ENCODE measurements at regions of chr7 and their contacts with region 1.

Region 1: DNA sequence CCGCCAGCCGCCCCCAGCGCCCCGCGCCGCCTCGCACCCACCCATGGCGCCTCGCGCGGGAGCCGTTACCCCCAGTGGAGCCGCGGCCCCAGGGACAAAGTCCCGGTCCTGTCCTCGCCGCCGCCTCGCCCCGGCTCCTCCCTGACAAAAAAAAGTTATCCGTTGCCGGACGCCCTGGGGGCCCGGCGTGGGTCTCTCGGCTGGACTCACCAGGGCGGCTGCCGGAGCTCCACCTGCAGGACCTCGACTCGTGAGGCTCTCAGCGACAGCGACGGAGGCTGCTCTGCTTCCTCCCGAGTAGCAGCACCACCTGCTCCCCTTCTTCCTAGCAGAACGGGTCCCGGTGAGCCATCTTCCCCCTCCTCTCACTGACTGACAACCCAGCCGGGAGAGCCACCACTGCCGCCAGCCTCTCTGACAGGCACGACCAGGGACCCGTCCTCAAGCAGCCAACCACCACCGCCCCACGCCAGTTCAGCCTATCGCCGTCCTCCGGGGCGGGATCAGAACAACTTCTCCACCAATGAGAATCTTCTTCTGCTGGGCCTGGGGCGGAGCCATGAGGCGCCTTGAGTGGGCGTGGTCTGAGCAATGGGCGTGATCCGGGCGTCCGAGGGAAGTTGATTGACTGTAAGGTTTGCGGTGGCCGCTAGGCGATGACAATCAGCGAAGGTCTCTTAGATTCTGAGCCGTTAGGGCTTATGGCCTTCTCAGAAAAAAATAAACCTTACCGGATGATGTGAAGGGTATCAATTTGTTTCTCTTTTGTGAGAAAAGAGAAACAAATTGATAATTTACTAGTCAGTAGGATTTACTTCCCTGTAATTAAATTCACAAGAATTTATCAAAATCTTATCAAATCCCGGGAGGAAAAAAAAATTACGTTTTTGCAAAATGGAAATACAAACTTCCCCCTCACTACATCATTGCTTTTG is at the start of gene HYCC1:
- DNase-seq: peak; percentile 97 to 100
- H3K4me3 ChIP-seq: peak within 1 kb of the TSS; percentile 76 to 98
- H3K27ac ChIP-seq: peak within 1 kb of the TSS; percentile 78 to 88
- H3K4me1 ChIP-seq: peaks cover 4 to 30% of the 10 kb centered on the region in 2 donors
- H3K27me3 ChIP-seq: no peaks in the 10 kb centered on the region
- CTCF ChIP-seq: peak; percentile 64 to 69 (median 69)
- total RNA-seq, gene HYCC1: 10.9 TPM

Region 2: DNA sequence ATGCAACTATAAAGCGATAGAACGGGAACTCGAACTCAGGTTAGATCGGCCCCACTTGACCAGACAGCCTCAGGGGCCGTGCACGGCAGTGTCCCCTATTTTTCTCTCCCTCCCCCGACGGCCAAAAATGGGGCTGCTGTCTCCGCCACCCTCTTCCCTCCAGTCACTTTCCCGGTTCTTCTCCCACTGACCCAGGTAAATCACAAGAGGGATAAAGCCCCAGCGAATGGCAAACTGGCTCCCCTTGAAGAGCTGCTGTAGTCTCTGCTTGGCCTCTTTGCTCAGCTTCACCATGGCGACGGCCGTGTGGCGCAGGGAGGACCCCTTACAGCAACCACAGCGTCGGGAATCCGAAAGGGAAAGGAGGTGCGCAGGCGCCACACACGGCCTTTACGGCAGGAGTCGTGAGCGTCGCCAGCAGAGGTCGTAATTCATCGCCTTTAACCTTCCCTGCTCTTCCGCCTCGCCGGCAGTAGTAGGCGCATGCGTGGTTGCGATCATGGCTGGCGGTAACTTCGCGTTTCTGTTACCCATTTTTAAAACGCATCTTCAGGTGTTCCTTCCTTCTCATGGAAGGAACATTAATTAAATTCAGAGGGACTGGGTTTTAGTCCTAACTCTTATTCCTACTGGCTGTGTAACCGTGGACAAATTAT is 191.4 kb before region 1 on chr7 and contains the start of gene TOMM7:
- intact Hi-C with region 1: loop called (anchors 2 kb)
- DNase-seq: peak; percentile 40 to 91
- H3K4me3 ChIP-seq: peak within 1 kb of the TSS; percentile 74 to 86
- H3K27ac ChIP-seq: peak within 1 kb of the TSS; percentile 67 to 80
- H3K4me1 ChIP-seq: peaks cover 3 to 9% of the 10 kb centered on the region in 2 donors
- H3K27me3 ChIP-seq: no peaks in the 10 kb centered on the region
- CTCF ChIP-seq: peak; percentile 24 to 55 (median 54)
- total RNA-seq, gene TOMM7: 65.1 TPM

Region 3: GRCh38 chr7:22945584-22945983 is 68.4 kb before region 1 on chr7:
- intact Hi-C with region 1: loop called (anchors 5 kb)
- DNase-seq: no peak
- H3K4me3 ChIP-seq: no peak overlapping the region
- H3K27ac ChIP-seq: no peak overlapping the region
- H3K4me1 ChIP-seq: peaks cover 0 to 3% of the 10 kb centered on the region in 2 donors
- H3K27me3 ChIP-seq: no peaks in the 10 kb centered on the region
- CTCF ChIP-seq: no peak

Region 4: GRCh38 chr7:22979861-22980260 is 34.1 kb before region 1 on chr7:
- intact Hi-C with region 1: loop called (anchors 5 kb)
- DNase-seq: no peak
- H3K4me3 ChIP-seq: no peak overlapping the region
- H3K27ac ChIP-seq: no peak overlapping the region
- H3K4me1 ChIP-seq: peaks cover 0 to 9% of the 10 kb centered on the region in 2 donors
- H3K27me3 ChIP-seq: no peaks in the 10 kb centered on the region
- CTCF ChIP-seq: no peak

Region 5: GRCh38 chr7:23055582-23056178 is 41.7 kb after region 1 on chr7:
- intact Hi-C with region 1: loop called (anchors 2 kb)
- DNase-seq: peak in 1 of 2 donors; percentile 68
- H3K4me3 ChIP-seq: no peak overlapping the region
- H3K27ac ChIP-seq: no peak overlapping the region
- H3K4me1 ChIP-seq: no peaks in the 10 kb centered on the region
- H3K27me3 ChIP-seq: no peaks in the 10 kb centered on the region
- CTCF ChIP-seq: peak; percentile 74 to 96 (median 88)